Posterior vena cava (tissue), 2 donors: ENCODE measurements at regions of chr4 and their contacts with region 1.

Region 1: DNA sequence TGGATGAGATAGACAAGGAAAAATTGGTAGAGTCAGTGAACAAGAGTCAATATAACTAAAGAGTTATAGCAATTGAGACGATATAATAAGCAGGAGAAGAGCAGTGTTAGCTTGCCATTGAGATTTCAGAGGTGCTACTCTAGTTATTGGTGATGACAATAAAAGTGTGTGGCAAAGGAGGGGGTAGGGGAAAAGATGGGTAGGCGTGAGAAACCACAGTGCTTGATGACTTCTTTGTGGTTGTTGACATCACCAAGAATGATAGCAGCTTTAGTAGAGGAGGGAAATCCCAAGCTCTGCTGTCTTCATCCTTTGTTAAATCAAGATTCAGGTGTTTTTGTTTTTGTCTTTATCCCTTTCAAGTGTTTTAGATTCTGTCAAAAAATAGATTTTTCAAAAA is 179.9 kb upstream of the PPP3CA start:
- DNase-seq: no peak

Region 2: GRCh38 chr4:101596781-101597552 is 69.8 kb after region 1 on chr4:
- intact Hi-C with region 1: no loop called
- DNase-seq: no peak

Region 3: GRCh38 chr4:101853028-101853427 is 325.8 kb after region 1 on chr4:
- intact Hi-C with region 1: loop called in 1 of 2 experiments (anchors 10 kb)
- DNase-seq: no peak